ENCODE measurements at regions of chr1 and their contacts with region 1.

Region 1: GRCh38 chr1:17922833-17923232 is 167.7 kb downstream of the ACTL8 start:
- DNase-seq: no peak
- ATAC-seq: peak; percentile 73
- H3K4me3 ChIP-seq: no peak overlapping the region
- H3K27ac ChIP-seq: no peak overlapping the region
- H3K4me1 ChIP-seq: no peaks in the 10 kb centered on the region
- H3K27me3 ChIP-seq: peaks cover 4% of the 10 kb centered on the region
- CTCF ChIP-seq: peak; percentile 88

Region 2: DNA sequence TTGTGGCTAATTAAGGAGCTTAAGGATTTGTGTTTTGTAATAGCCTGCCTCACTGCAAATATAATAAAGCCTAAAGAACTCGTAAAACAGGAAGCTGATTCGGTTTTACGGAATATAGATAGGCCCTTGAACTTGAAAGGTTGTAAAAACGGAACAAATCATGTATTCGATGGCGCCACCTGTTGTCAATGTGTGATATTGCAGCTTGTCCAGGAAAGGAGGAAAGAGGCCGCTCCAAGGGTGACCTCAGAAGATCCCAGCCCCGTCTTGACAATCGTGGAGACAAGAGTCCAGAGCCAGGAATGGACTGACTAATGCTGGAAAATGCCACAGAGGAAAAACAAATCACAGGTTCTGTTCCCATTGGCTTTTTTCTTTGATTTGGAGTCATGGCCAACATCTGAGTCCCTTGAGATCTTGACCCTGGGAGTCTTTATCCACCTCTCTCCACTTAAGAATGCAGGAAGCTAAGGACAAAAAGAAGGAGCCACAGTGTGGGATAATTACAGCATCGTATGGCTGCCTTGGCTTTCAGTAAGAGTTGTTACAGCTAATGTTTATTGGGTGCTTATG is 177.7 kb after region 1 on chr1:
- CTCF ChIA-PET with region 1: interaction called, 5 read pairs
- POLR2A ChIA-PET with region 1: no interaction called
- in situ Hi-C with region 1: no loop called
- intact Hi-C with region 1: loop called (anchors 2 kb)
- DNase-seq: peak; percentile 30
- ATAC-seq: peak; percentile 77
- H3K4me3 ChIP-seq: no peak overlapping the region
- H3K27ac ChIP-seq: no peak overlapping the region
- H3K4me1 ChIP-seq: no peaks in the 10 kb centered on the region
- H3K27me3 ChIP-seq: peaks cover 9% of the 10 kb centered on the region; the same call in 1 of the 2 replicates
- CTCF ChIP-seq: peak; percentile 88

Region 3: DNA sequence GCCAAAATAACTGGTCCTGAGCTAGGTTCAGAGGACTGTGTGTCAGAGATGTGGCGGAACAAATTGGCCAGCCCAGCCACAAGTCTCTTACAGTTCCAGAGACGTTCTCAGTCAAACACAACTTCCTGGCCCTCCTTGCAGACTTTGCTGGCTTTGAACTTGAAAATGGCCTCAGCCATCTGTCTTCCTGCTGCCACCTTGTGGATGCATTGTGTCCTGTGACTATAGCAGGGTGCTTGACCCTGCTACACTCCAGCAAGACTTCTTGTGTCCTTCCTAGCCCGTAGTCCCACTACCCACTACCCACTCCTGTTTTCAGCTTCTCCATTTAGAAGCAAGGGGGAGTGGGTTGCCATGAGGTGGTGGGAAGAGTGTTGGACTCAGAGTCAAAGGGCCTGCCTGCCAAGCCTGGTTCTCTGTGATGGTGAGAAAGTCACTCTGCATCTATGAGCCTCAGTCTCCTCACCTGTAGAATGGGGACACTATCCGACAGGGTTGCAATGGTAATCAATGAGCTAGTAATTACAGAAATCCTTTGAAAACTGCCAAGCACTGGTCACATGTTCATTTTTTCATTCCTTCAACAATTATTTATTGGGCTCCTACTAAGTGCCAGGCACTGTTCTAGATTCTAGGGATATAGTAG is 294.7 kb after region 1 on chr1:
- CTCF ChIA-PET with region 1: no interaction called
- POLR2A ChIA-PET with region 1: no interaction called
- in situ Hi-C with region 1: no loop called
- intact Hi-C with region 1: loop called (anchors 10 kb)
- DNase-seq: no peak
- ATAC-seq: peak; percentile 73; the same call in 1 of the 2 replicates
- H3K4me3 ChIP-seq: no peak overlapping the region
- H3K27ac ChIP-seq: no peak overlapping the region
- H3K4me1 ChIP-seq: no peaks in the 10 kb centered on the region
- H3K27me3 ChIP-seq: peaks cover 21% of the 10 kb centered on the region
- CTCF ChIP-seq: peak; percentile 70

Region 4: GRCh38 chr1:18556364-18556763 is 633.5 kb after region 1 on chr1:
- CTCF ChIA-PET with region 1: no interaction called
- POLR2A ChIA-PET with region 1: no interaction called
- in situ Hi-C with region 1: no loop called
- intact Hi-C with region 1: loop called (anchors 10 kb)
- DNase-seq: no peak
- ATAC-seq: peak; percentile 77
- H3K4me3 ChIP-seq: no peak overlapping the region
- H3K27ac ChIP-seq: no peak overlapping the region
- H3K4me1 ChIP-seq: peaks cover 8% of the 10 kb centered on the region; the same call in 1 of the 2 replicates
- H3K27me3 ChIP-seq: peaks cover 23% of the 10 kb centered on the region
- CTCF ChIP-seq: peak; percentile 81